CD14-positive monocyte (primary cell): ENCODE measurements at regions of chr5 and their contacts with region 1.

Region 1: DNA sequence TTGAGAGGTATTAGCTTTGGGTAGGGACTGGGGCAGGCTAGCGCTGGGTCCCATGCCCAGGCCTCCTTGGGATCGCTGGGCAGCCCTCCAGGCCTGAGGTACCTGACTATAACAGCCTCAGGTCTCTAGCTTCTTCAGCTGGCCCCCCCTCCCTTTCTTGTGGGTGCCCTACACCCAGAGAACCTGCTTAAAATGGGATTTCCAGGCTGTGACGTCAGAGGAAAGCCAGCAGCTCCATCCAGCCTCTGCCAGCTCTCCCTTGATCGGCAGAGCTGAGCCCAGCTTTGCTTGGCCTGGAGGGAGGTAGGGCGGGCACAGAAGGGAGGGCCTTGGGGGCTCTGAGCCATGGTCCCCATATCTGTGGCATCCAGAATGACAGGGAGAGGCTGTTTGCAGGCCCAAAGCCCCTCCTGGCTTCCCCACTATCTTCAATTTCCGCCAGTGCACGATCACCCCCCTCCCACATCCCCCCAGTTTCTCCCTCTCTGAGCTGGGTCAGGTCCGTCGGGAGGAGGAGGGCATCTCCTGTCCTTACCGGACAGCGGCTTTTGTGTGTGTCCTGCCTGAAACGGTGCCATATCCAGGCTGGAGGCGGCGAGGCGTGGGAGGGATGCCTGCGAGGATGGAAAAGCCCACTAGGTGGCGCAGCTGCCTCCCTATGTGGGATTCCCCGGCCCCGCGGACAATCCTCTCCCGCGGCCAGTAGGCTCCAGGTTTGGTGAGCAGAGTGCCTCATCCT is 10.8 kb downstream of the REEP2 start:
- DNase-seq: peak; percentile 73 to 81 (median 80)
- H3K4me3 ChIP-seq: no peak overlapping the region
- H3K4me3 Mint-ChIP-seq: no peak overlapping the region
- H3K27ac ChIP-seq: no peak overlapping the region
- H3K27ac Mint-ChIP-seq: peak overlapping the region in 1 of 7 donors; percentile 73
- H3K4me1 ChIP-seq: peaks cover 0 to 3% of the 10 kb centered on the region in 2 donors
- H3K4me1 Mint-ChIP-seq: peaks cover 6% of the 10 kb centered on the region
- H3K27me3 ChIP-seq: no peaks in the 10 kb centered on the region
- H3K27me3 Mint-ChIP-seq: peaks cover 4 to 15% (median 9%) of the 10 kb centered on the region in 3 donors
- CTCF ChIP-seq: peak; percentile 91

Region 2: DNA sequence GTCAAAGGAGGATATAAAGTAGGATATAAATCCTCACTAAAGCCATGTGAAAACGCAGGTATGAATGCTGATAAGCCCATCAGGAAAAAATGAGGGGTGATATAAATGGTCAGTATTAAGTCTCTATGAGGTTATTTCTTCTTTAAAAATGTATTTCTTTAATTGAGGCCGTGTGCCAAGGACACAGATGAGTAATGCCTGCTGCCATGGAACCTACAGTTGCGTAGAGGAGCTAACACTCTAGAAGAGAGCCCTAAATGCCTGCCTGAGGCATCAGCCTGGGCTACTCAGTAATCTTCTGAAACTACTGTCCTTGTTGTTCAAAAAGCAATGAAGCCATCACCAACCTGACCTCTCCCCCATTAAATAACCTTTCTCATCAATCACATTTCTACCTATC is 798.6 kb before region 1 on chr5:
- intact Hi-C with region 1: no loop called
- DNase-seq: no peak
- H3K4me3 ChIP-seq: no peak overlapping the region
- H3K4me3 Mint-ChIP-seq: no peak overlapping the region
- H3K27ac ChIP-seq: no peak overlapping the region
- H3K27ac Mint-ChIP-seq: no peak overlapping the region
- H3K4me1 ChIP-seq: no peaks in the 10 kb centered on the region
- H3K4me1 Mint-ChIP-seq: no peaks in the 10 kb centered on the region
- H3K27me3 ChIP-seq: no peaks in the 10 kb centered on the region
- H3K27me3 Mint-ChIP-seq: no peaks in the 10 kb centered on the region
- CTCF ChIP-seq: no peak

Region 3: DNA sequence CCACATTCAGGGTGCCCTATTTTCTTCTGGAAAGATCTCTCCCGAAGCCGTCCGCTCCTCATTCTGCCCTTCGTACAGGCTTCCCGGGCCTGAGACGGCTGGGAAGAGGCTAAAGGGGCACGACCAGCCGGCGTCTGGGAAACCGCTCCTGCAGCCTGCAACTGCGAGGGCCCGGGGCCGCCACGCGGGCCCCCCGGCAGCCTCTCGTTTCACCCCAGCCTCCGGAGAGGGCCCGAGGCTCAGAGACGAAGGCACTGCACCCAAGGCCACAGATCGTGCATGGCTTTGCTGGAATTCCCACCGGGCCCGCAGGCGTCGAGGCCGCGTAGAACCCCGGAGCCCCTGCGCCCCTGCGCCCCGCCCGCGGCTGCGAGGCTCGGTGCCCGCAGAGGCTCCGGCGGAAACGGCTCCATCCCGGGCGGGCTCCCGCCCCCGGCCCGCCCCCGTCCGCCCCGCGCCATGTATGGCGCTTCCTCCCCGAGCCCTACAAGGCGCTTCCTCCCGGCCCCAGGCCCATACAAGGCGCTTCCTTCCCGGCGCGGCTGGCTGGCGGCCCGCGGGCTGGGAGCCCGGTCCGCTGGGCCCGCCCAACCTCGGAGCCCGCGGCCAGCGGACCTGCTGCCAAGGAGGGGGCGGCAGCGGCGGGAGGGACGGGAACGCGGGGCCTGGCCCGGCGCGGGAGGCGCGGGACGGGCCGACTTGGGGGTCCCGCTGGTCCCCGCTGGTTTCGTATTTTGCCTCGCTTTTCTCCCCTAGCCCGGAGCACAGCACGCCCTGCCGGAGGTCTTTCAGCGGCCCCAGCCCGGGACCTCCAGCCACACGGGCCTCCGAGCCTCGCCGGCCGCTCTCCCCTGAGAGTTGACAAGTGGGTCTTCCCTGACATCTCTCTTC is 42.2 kb after region 1 on chr5:
- intact Hi-C with region 1: no loop called
- DNase-seq: peak; percentile 78 to 84 (median 81)
- H3K4me3 ChIP-seq: peak overlapping the region; percentile 17 to 78 (median 42)
- H3K4me3 Mint-ChIP-seq: peak overlapping the region; percentile 80 to 93
- H3K27ac ChIP-seq: no peak overlapping the region
- H3K27ac Mint-ChIP-seq: no peak overlapping the region
- H3K4me1 ChIP-seq: peaks cover 17 to 24% of the 10 kb centered on the region in 2 donors
- H3K4me1 Mint-ChIP-seq: peaks cover 20% of the 10 kb centered on the region
- H3K27me3 ChIP-seq: peaks cover 20 to 41% of the 10 kb centered on the region in 2 donors
- H3K27me3 Mint-ChIP-seq: peaks cover 39 to 45% (median 44%) of the 10 kb centered on the region in 3 donors
- CTCF ChIP-seq: no peak

Region 4: GRCh38 chr5:138503487-138504270 is 54.0 kb after region 1 on chr5:
- intact Hi-C with region 1: loop called (anchors 2 kb)
- DNase-seq: peak; percentile 52 to 62 (median 59)
- H3K4me3 ChIP-seq: no peak overlapping the region
- H3K4me3 Mint-ChIP-seq: no peak overlapping the region
- H3K27ac ChIP-seq: no peak overlapping the region
- H3K27ac Mint-ChIP-seq: peak overlapping the region in 3 of 7 donors; percentile 13 to 36 (median 15)
- H3K4me1 ChIP-seq: peaks cover 3 to 7% of the 10 kb centered on the region in 2 donors
- H3K4me1 Mint-ChIP-seq: peaks cover 14% of the 10 kb centered on the region
- H3K27me3 ChIP-seq: no peaks in the 10 kb centered on the region
- H3K27me3 Mint-ChIP-seq: peaks cover 2 to 4% (median 2%) of the 10 kb centered on the region in 3 donors
- CTCF ChIP-seq: peak; percentile 82